ENCODE measurements at regions of chr4 and their contacts with region 1.

Region 1: DNA sequence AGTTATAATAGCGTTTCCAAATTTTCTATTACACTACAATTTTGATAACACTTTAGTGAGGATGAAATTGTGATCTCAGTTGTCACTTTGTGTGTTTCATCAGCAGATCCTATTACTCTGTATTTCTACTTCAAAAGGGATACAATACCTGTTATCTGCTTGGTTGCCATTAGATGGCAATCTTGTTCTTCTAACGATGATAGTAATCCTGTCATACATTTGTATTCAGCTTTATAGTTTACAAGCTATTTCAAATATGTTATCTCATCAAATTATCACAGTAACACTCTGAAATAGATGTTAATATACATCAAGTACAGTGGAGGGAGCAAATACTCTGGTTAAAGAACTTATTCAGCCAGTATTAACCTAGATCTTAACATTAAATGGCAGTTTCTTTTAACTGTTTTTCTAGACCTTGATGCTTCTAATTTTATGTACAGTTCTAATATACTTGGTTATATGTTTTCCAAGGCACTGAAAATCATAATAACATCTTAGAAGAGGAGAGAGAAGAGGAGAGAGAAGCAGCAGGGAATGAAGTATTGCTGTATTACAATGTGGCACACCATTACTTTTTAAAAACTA is 292.0 kb downstream of the CCSER1 start:
- DNase-seq: no peak
- H3K4me3 Mint-ChIP-seq: no peak overlapping the region
- H3K27ac Mint-ChIP-seq: no peak overlapping the region
- H3K4me1 Mint-ChIP-seq: no peaks in the 10 kb centered on the region
- H3K27me3 Mint-ChIP-seq: no peaks in the 10 kb centered on the region

Region 2: GRCh38 chr4:91267543-91267942 is 848.3 kb after region 1 on chr4:
- intact Hi-C with region 1: no loop called
- DNase-seq: no peak
- H3K4me3 Mint-ChIP-seq: no peak overlapping the region
- H3K27ac Mint-ChIP-seq: no peak overlapping the region
- H3K4me1 Mint-ChIP-seq: no peaks in the 10 kb centered on the region
- H3K27me3 Mint-ChIP-seq: no peaks in the 10 kb centered on the region

Region 3: GRCh38 chr4:92387459-92388069 is 1968.3 kb after region 1 on chr4:
- intact Hi-C with region 1: loop called (anchors 5 kb)
- DNase-seq: no peak
- H3K4me3 Mint-ChIP-seq: no peak overlapping the region
- H3K27ac Mint-ChIP-seq: no peak overlapping the region
- H3K4me1 Mint-ChIP-seq: no peaks in the 10 kb centered on the region
- H3K27me3 Mint-ChIP-seq: no peaks in the 10 kb centered on the region

Measured in activated T-helper 2 cell treated with anti-CD3 and anti-CD28 coated beads, Interferon-gamma antibody, Interleukin-2, Interleukin-4, amounts not matched to agents 10 μg/mL and 5 μg/mL and 100 μg/mL, durations not matched to agents 14 hours and 24 hours and 36 hours (primary cell).